ENCODE measurements at regions of chr7 and their contacts with region 1.

Region 1: DNA sequence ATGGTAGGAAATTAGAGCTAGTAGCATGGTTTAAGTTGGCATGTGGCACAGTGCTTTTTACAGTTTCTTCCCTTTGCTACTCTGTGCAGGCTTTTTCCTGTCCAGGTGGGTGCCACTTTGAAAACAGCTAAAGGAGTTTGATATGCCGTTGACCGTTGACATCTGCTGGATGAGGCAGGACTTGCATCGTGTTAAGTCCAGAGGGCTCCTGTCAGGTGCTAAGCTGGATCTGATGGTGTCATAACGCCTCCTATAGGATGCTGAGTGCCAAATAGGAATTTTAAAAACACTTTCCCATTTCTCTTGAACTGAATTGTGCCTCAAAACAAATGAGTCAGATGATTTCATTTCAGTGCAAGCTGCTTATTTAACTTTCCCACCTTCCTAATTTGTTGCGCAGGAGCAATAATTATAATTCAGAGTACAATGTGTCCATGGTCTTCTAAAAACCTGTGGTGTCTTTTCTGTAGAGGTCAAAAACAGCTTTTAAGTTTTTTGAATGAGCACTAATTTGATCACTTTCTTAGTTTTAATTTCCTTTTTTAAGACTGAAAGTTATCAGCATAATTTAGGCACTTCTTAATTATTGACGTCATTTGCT is 178.3 kb downstream of the CDCA7L start:
- DNase-seq: peak; percentile 80
- H3K4me3 Mint-ChIP-seq: no peak overlapping the region
- H3K27ac Mint-ChIP-seq: no peak overlapping the region
- H3K4me1 Mint-ChIP-seq: no peaks in the 10 kb centered on the region
- H3K27me3 Mint-ChIP-seq: peaks cover 67% of the 10 kb centered on the region
- CTCF ChIP-seq: peak; percentile 90

Region 2: DNA sequence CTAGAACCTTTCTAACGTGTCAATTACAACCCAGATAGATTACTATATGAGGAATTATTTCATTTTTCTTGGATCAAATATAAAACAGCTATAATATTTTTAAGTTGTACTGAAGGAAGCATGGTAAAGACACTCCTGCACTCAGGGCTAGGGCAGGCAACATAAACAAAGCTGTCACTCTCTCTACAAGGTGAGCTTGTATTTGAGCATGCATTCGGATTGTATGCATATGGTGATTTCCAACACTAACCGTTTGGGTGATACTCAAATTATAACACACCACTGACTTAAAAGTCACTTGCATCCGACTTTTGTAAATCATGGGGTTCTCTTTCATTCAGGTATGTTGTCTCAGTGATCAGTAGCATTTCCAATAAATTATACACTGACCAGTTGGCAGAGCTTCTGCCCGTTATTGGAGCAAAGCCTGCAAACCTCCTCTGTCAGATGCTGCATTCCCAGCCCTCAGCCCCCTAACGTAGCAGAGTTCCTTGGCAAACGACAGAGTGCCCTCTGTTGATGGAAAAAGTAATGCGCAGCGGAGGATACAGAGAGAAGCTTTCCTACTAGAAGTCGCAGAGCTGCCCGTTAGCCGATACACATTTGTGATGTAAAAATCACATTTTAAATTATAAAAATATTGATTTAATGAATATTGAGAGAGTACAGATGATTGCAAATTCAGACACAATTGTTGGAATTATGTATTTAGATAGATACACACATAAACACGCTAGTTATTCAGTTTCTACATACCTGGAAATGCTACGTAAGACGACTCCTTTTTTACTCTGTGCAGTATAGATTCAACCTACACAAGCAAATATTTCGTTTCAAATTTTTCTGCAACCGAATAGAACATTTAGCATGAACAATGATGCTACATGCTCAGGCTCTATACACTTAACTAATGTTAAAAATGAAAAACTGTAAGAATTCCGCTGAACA is 513.4 kb before region 1 on chr7:
- CTCF ChIA-PET with region 1: interaction called, 39 read pairs
- intact Hi-C with region 1: loop called (anchors 1 kb)
- DNase-seq: peak; percentile 77
- H3K4me3 Mint-ChIP-seq: no peak overlapping the region
- H3K27ac Mint-ChIP-seq: no peak overlapping the region
- H3K4me1 Mint-ChIP-seq: no peaks in the 10 kb centered on the region
- H3K27me3 Mint-ChIP-seq: peaks cover 82% of the 10 kb centered on the region
- CTCF ChIP-seq: peak; percentile 73

Region 3: GRCh38 chr7:21523779-21524178 is 243.6 kb before region 1 on chr7:
- CTCF ChIA-PET with region 1: interaction called, 5 read pairs
- intact Hi-C with region 1: loop called (anchors 5 kb)
- DNase-seq: no peak
- H3K4me3 Mint-ChIP-seq: no peak overlapping the region
- H3K27ac Mint-ChIP-seq: no peak overlapping the region
- H3K4me1 Mint-ChIP-seq: no peaks in the 10 kb centered on the region
- H3K27me3 Mint-ChIP-seq: no peaks in the 10 kb centered on the region
- CTCF ChIP-seq: no peak

Region 4: DNA sequence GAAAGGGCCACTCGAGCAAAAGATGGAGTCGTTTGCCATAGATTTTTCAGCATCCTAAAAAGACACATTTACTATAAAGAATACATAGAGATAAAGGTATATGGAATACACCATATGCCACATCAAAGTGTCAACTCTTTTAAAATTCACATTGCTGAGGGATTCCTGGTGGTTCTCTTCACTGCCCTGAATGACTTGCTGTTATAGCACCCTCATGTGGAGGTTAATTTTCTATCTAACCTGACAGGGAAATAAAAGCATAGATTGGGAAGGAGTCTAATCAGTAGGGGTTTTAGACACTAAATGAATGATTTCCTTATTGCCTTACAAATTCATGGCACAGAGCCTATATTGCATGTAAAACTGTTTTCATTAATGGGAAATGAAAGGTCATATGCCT is 198.6 kb before region 1 on chr7:
- CTCF ChIA-PET with region 1: interaction called, 10 read pairs
- intact Hi-C with region 1: loop called (anchors 1 kb)
- DNase-seq: peak; percentile 24
- H3K4me3 Mint-ChIP-seq: no peak overlapping the region
- H3K27ac Mint-ChIP-seq: no peak overlapping the region
- H3K4me1 Mint-ChIP-seq: peaks cover 11% of the 10 kb centered on the region
- H3K27me3 Mint-ChIP-seq: no peaks in the 10 kb centered on the region
- CTCF ChIP-seq: no peak

Region 5: GRCh38 chr7:21603972-21604749 is 163.2 kb before region 1 on chr7:
- CTCF ChIA-PET with region 1: no interaction called
- intact Hi-C with region 1: no loop called
- DNase-seq: no peak
- H3K4me3 Mint-ChIP-seq: no peak overlapping the region
- H3K27ac Mint-ChIP-seq: no peak overlapping the region
- H3K4me1 Mint-ChIP-seq: peaks cover 11% of the 10 kb centered on the region
- H3K27me3 Mint-ChIP-seq: no peaks in the 10 kb centered on the region
- CTCF ChIP-seq: no peak

Region 6: DNA sequence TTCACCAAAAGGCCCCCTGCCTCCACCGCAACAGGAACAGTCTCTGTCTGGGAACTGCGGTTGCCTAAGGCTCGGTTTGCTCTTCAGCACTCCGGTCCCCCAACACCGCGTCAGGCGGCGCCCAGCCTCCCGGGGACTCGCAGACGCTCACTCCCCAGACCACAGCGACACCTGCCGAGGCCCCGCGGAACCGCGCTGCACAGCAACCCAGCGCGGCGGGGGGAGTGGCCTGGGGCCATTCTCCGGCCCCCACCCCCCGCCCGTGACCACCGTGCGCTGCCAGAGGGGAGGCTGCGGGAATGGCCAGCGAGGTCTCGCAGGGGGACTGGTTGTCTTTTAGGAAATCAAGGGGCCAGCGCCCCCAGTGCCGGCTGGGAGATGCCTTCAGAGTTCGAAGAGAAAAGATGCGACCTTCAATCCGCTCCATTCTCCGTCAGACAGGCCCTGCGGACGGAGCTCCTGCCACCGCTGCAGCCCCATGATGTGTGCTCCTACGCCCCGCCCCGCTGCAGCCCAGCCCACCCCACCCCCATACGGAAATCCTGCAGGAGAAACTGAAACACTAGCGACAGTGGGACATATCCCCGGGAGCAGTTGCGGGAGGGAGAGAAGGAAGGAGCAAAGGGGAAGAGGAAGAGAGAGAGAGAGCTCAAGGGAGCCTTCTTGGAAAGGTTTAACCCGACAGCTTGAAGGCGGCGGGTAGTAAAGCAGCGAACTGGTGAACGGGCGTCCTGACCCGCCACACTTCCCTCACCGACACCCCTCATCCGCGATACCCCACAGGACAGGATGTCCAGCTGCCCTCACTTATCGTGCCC is 315.7 kb after region 1 on chr7:
- CTCF ChIA-PET with region 1: interaction called, 26 read pairs
- intact Hi-C with region 1: loop called (anchors 5 kb)
- DNase-seq: peak; percentile 99
- H3K4me3 Mint-ChIP-seq: peak overlapping the region; percentile 89
- H3K27ac Mint-ChIP-seq: peak overlapping the region; percentile 95
- H3K4me1 Mint-ChIP-seq: peaks cover 18% of the 10 kb centered on the region
- H3K27me3 Mint-ChIP-seq: peaks cover 40% of the 10 kb centered on the region
- CTCF ChIP-seq: peak; percentile 99

Measured in Calu3 (cell line).